A673 (cell line): ENCODE measurements at regions of chr1 and their contacts with region 1.

Region 1: DNA sequence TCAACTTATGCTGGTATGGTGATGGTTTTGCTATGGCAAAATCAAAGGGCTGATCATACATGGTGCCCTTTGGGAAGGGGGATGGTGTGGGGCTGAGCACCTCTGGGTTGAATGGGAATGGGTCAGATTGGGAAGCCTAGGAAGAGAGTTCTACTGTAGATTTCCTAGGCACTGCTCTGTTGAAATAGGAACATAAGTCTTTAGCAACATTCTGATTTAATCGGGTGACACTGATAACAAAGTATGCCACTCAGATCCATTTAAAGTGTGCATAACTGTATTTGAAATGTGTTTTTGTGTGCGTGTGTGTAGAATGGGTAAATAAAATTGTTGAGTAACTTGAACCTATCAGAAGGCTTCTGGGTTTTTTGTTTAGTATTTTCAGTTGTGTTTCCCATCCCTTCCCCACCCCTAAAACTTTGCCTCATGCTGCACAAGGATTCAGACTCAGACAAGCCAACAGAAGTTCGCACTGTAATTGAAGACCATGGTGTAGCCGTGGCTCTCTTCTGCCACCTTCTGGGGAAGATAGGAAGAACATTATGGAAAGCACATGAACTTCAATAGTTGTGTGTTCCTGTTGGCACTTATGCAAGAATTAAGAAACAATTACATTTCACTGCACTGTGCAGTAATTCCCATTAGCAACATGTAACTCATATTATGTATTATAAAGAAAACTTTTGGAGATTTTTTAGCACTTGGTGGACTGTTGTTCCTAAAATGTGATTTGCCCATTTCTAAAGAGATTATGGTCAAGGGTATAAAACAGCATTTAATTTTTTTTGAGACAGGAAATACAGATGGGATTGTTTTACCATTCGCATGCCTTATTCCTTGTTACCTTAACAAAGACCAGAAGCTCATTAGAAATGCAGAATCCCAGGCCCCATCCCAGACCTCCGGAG is 10.9 kb upstream of the C4BPB start:
- DNase-seq: peak; percentile 80
- H3K4me3 ChIP-seq: no peak overlapping the region
- H3K27ac ChIP-seq: no peak overlapping the region
- H3K4me1 ChIP-seq: no peaks in the 10 kb centered on the region
- H3K27me3 ChIP-seq: peaks cover 4% of the 10 kb centered on the region
- CTCF ChIP-seq: peak; percentile 88

Region 2: GRCh38 chr1:206725109-206725963 is 352.4 kb before region 1 on chr1:
- CTCF ChIA-PET with region 1: no interaction called
- POLR2A ChIA-PET with region 1: no interaction called
- intact Hi-C with region 1: loop called (anchors 5 kb)
- DNase-seq: peak; percentile 65
- H3K4me3 ChIP-seq: no peak overlapping the region
- H3K27ac ChIP-seq: no peak overlapping the region
- H3K4me1 ChIP-seq: no peaks in the 10 kb centered on the region
- H3K27me3 ChIP-seq: no peaks in the 10 kb centered on the region
- CTCF ChIP-seq: peak; percentile 79

Region 3: DNA sequence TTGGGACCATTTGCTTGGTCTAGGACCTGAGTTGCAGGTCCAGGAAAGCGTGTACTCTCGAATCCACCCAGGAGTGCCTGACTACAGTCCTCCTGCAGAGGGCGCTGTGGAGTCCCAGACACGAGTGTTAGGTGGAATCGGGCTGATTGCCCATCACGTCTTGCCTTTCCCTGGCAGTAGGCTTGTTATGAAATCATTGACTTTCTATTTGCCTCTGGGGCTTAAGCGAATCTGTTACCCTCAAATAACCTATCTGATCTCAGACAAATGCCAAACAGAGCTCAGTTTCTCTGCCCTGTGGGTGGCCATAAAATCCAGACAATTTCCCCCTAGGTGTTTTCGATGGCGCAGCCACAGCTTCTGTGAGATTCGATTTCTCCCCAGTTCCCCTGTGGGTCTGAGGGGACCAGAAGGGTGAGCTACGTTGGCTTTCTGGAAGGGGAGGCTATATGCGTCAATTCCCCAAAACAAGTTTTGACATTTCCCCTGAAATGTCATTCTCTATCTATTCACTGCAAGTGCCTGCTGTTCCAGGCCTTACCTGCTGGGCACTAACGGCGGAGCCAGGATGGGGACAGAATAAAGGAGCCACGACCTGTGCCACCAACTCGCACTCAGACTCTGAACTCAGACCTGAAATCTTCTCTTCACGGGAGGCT is 212.6 kb before region 1 on chr1 and contains the start of gene IL20:
- CTCF ChIA-PET with region 1: no interaction called
- POLR2A ChIA-PET with region 1: no interaction called
- intact Hi-C with region 1: loop called (anchors 5 kb)
- DNase-seq: peak; percentile 82
- H3K4me3 ChIP-seq: no peak within 1 kb of the TSS
- H3K27ac ChIP-seq: no peak within 1 kb of the TSS
- H3K4me1 ChIP-seq: no peaks in the 10 kb centered on the region
- H3K27me3 ChIP-seq: peaks cover 39% of the 10 kb centered on the region
- CTCF ChIP-seq: peak; percentile 94
- total RNA-seq, gene IL20: not detected in 2 replicates

Region 4: DNA sequence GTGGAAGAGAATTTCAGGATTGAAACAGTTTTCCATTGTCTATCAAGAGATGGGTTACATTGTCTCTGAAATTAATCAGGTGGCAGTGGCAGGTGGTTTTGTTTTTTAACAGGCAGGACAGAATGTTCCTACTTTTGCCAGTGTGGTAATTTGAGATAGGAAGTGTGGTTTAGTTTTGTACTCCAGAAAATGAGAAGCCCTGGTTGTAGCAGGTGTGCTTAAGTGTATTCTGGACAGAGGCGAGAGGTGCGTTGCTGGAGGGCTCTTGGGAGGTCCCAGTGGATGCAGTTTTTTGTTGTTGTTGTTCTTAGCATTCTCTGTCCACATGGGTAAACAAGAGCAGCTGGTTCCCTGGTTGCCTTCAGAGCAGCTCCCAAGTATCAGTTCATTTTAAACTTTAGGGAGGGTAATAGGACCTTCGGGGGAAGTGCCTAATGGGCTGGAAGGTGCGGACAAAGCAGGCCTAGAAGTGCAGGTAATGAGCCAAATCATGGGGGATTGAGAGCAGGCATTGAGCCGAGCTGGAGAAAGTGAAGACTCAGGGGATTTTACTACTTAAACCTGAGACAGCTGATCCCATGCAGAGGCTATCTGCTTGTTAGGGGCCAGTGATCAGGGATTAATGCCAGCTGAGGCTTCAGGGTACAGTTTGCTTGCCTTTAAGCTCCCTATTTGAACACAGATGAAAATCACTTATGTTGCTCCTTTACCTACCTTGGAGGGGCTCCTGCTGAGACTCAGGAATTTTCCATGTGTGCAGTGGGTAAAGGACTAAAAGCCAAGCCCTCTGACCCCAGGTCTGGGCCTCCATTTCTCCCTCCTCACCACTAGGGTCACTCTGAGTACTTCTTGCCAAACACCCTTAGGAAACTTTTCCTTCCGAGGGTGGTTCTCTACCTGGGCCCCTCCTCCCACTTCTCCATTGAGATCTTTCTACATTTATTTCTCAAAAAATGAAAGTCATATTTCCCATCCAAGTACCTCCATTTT is 18.6 kb before region 1 on chr1:
- CTCF ChIA-PET with region 1: no interaction called
- POLR2A ChIA-PET with region 1: no interaction called
- intact Hi-C with region 1: no loop called
- DNase-seq: no peak
- H3K4me3 ChIP-seq: no peak overlapping the region
- H3K27ac ChIP-seq: no peak overlapping the region
- H3K4me1 ChIP-seq: no peaks in the 10 kb centered on the region
- H3K27me3 ChIP-seq: no peaks in the 10 kb centered on the region
- CTCF ChIP-seq: no peak